Left lung (tissue), 14 donors: ENCODE measurements at regions of chr3 and their contacts with region 1.

Region 1: GRCh38 chr3:148945116-148945515 is 46.2 kb upstream of the GYG1 start:
- DNase-seq: no peak
- ATAC-seq: no peak
- H3K4me3 ChIP-seq: no peak overlapping the region
- H3K27ac ChIP-seq: no peak overlapping the region
- H3K4me1 ChIP-seq: no peaks in the 10 kb centered on the region
- H3K27me3 ChIP-seq: no peaks in the 10 kb centered on the region
- CTCF ChIP-seq: no peak

Region 2: GRCh38 chr3:148861277-148861869 is 83.7 kb before region 1 on chr3:
- intact Hi-C with region 1: loop called in 1 of 2 experiments (anchors 5 kb)
- DNase-seq: peak in 1 of 4 donors; percentile 29
- ATAC-seq: peak; percentile 78
- H3K4me3 ChIP-seq: no peak overlapping the region
- H3K27ac ChIP-seq: no peak overlapping the region
- H3K4me1 ChIP-seq: no peaks in the 10 kb centered on the region
- H3K27me3 ChIP-seq: no peaks in the 10 kb centered on the region
- CTCF ChIP-seq: peak; percentile 58 to 81